Sigmoid colon (tissue), 7 donors: ENCODE measurements at regions of chr2 and their contacts with region 1.

Region 1: GRCh38 chr2:23384551-23385349 is at the start of gene KLHL29:
- DNase-seq: peak; percentile 95
- H3K4me3 ChIP-seq: peak within 1 kb of the TSS; percentile 75 to 94 (median 88)
- H3K27ac ChIP-seq: peak within 1 kb of the TSS; percentile 91 to 98 (median 96)
- H3K4me1 ChIP-seq: peaks cover 0 to 21% (median 11%) of the 10 kb centered on the region in 4 donors
- H3K27me3 ChIP-seq: no peaks in the 10 kb centered on the region
- CTCF ChIP-seq: no peak
- EP300 ChIP-seq: no peak
- POLR2A ChIP-seq: no peak
- total RNA-seq, gene KLHL29: 6.3 to 25.5 (median 13.9) TPM

Region 2: DNA sequence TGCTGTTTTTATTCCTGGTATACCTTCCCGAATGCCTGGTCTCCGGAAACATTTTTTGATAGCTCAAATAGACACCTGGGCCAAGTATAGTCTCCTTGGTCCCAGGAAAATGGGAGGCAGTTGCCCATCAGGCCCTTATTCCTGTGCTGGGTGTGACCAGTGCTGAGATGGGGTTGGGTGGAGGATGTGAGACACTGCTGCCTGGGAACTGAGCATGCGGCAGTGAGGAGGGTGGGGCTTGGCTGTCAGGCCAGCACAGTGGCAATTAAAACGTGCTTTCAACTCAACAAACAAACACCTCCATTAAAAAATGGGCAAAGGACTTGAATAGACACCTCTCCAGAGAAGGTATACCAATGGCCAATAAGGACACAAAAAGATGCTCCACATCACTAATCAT is 12.7 kb after region 1 on chr2:
- intact Hi-C with region 1: loop called (anchors 1 kb)
- DNase-seq: no peak
- H3K4me3 ChIP-seq: no peak overlapping the region
- H3K27ac ChIP-seq: no peak overlapping the region
- H3K4me1 ChIP-seq: peaks cover 0 to 24% (median 10%) of the 10 kb centered on the region in 4 donors
- H3K27me3 ChIP-seq: no peaks in the 10 kb centered on the region
- CTCF ChIP-seq: no peak
- EP300 ChIP-seq: no peak
- POLR2A ChIP-seq: no peak

Region 3: GRCh38 chr2:23441414-23441813 is 56.7 kb after region 1 on chr2:
- intact Hi-C with region 1: no loop called
- DNase-seq: no peak
- H3K4me3 ChIP-seq: no peak overlapping the region
- H3K27ac ChIP-seq: no peak overlapping the region
- H3K4me1 ChIP-seq: peaks cover 0 to 22% (median 11%) of the 10 kb centered on the region in 4 donors
- H3K27me3 ChIP-seq: no peaks in the 10 kb centered on the region
- CTCF ChIP-seq: no peak
- EP300 ChIP-seq: no peak
- POLR2A ChIP-seq: no peak

Region 4: DNA sequence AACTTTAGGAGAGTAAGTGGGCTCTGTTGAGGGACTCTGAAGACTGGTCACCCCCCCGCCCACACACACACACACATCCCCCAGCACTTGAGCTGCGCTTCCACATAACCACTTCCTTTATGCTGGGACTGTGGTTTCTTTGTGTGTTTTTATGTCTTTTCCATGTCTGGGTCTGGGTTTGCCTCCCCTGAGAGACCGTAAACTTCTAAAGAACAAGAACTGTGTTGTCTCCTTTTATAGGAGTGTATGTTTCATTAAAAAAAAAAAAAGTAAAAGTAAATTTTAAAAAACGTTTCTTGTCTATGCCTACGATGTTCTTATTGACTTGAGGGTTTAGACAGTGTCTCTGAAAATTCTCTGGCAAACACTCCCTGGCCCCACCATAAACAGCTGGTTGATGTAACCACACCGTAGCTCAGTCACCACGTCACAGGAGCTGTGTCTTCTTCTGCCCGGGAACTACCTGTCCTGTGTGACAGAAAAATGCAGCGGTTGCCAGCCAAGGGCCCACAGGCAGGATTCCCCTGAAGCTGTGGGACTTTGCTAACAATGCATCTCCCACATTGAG is 68.2 kb after region 1 on chr2:
- intact Hi-C with region 1: loop called (anchors 5 kb)
- DNase-seq: peak; percentile 80
- H3K4me3 ChIP-seq: no peak overlapping the region
- H3K27ac ChIP-seq: peak overlapping the region; percentile 57 to 77 (median 68)
- H3K4me1 ChIP-seq: peaks cover 0 to 51% (median 41%) of the 10 kb centered on the region in 4 donors
- H3K27me3 ChIP-seq: no peaks in the 10 kb centered on the region
- CTCF ChIP-seq: no peak
- EP300 ChIP-seq: peak in 1 of 4 donors; percentile 56
- POLR2A ChIP-seq: no peak

Region 5: DNA sequence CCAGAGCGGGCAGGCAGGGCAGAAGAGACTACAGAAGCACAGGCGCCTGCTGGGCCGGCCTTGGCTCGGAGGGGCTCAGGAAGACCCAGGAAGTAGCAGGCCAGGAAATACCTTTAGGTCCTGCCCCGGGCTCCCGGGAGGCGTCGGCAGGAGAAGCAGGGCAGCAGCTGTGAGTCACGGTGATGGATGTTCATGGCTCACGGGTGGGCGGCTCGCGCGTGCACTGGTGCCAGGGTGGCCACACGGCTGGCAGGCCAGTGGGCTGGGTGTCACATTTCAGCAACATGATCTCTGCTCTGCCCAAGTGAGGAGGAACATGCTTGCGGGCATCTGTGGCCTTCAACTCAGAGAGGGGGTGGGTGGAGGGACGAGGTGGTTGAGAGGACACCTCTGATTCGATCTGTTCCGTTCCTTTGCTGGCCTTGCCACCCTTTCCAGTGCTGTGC is 139.5 kb after region 1 on chr2:
- intact Hi-C with region 1: loop called (anchors 5 kb)
- DNase-seq: peak; percentile 84
- H3K4me3 ChIP-seq: no peak overlapping the region
- H3K27ac ChIP-seq: peak overlapping the region; percentile 87 to 93 (median 92)
- H3K4me1 ChIP-seq: peaks cover 0 to 69% (median 52%) of the 10 kb centered on the region in 4 donors
- H3K27me3 ChIP-seq: no peaks in the 10 kb centered on the region
- CTCF ChIP-seq: no peak
- EP300 ChIP-seq: no peak
- POLR2A ChIP-seq: no peak

Region 6: DNA sequence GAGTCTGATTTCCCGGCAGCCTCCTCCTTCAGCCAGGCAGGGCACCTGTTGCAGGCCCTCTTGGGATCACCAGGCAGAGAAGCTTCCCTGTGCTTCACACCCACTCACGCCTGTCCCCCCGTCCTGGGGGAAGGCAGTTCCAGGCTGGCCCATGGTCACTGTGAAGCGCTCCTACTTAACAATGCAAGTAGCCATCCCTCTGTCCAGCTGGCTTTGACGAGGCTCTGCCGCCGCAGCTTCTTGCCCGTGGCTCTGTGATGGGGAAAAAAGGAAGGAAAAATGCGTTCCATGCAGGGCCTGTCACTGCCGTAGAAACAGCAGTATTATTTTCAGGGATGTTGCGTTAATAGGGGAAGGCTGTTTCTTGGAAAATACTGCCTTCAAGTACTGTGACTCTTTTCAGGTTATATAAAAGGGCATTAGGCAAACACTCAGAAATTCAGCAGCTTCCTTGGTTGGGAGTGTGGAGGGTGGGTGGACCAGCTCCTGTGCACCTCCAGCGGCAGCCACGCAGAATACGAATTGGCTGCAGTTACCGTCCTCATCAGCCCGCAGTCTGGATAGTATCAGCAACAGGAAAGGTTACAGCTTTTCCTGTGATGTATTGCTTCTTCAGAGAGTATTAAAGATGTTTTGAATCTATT is 232.5 kb after region 1 on chr2:
- intact Hi-C with region 1: loop called (anchors 1 kb)
- DNase-seq: peak; percentile 97
- H3K4me3 ChIP-seq: peak overlapping the region in 3 of 4 donors; percentile 10 to 23 (median 12)
- H3K27ac ChIP-seq: peak overlapping the region; percentile 88 to 96 (median 93)
- H3K4me1 ChIP-seq: peaks cover 0 to 69% (median 60%) of the 10 kb centered on the region in 4 donors
- H3K27me3 ChIP-seq: no peaks in the 10 kb centered on the region
- CTCF ChIP-seq: peak; percentile 68 to 93 (median 82)
- EP300 ChIP-seq: peak; percentile 57 to 94 (median 78)
- POLR2A ChIP-seq: no peak

Region 7: GRCh38 chr2:23662941-23663920 is 278.5 kb after region 1 on chr2:
- intact Hi-C with region 1: loop called (anchors 5 kb)
- DNase-seq: peak; percentile 83
- H3K4me3 ChIP-seq: peak overlapping the region; percentile 6 to 42 (median 38)
- H3K27ac ChIP-seq: peak overlapping the region; percentile 3 to 61 (median 38)
- H3K4me1 ChIP-seq: peaks cover 0 to 20% (median 17%) of the 10 kb centered on the region in 4 donors
- H3K27me3 ChIP-seq: no peaks in the 10 kb centered on the region
- CTCF ChIP-seq: no peak
- EP300 ChIP-seq: no peak
- POLR2A ChIP-seq: no peak

Region 8: GRCh38 chr2:23926750-23927571 is 542.2 kb after region 1 on chr2 and contains the start of gene ATAD2B:
- intact Hi-C with region 1: loop called (anchors 10 kb)
- DNase-seq: peak; percentile 95
- H3K4me3 ChIP-seq: peak within 1 kb of the TSS; percentile 66 to 93 (median 82)
- H3K27ac ChIP-seq: peak within 1 kb of the TSS; percentile 93 to 99 (median 95)
- H3K4me1 ChIP-seq: peaks cover 0 to 38% (median 28%) of the 10 kb centered on the region in 4 donors
- H3K27me3 ChIP-seq: no peaks in the 10 kb centered on the region
- CTCF ChIP-seq: peak; percentile 47 to 84 (median 51)
- EP300 ChIP-seq: no peak
- POLR2A ChIP-seq: peak; percentile 58 to 85
- total RNA-seq, gene ATAD2B: 19.7 to 22.5 (median 21.0) TPM